ENCODE measurements at regions of chr7 and their contacts with region 1.

Region 1: DNA sequence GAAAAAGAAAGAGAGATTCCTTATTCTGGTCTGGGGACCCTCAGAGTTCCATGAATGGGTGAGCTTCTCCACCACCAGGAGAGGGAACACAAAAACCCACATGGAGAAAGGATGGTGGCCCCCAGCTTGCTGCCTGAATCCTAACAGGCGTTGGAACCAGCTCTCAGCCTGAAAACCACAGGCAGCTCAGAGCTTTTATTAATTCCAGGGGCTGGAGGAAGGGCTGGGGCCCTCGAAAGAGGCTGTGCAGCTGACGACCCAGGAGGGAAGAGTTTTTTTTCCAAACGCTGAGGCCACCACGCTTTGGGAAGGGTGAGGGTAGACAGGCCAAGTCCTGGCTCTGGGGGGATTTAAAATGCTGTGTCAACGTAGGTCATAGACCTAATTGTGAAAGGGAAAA is 10.8 kb upstream of the ELN start:
- DNase-seq: no peak
- H3K4me3 ChIP-seq: no peak overlapping the region
- CTCF ChIP-seq: no peak

Region 2: GRCh38 chr7:73865738-73866445 is 151.2 kb before region 1 on chr7:
- in situ Hi-C with region 1: loop called (anchors 5 kb)
- DNase-seq: no peak
- H3K4me3 ChIP-seq: no peak overlapping the region
- CTCF ChIP-seq: peak; percentile 74

Region 3: GRCh38 chr7:73978661-73979563 is 38.2 kb before region 1 on chr7:
- in situ Hi-C with region 1: no loop called
- DNase-seq: no peak
- H3K4me3 ChIP-seq: no peak overlapping the region
- CTCF ChIP-seq: peak; percentile 29

Region 4: GRCh38 chr7:74083117-74083876 is 66.2 kb after region 1 on chr7 and contains the start of gene LIMK1:
- in situ Hi-C with region 1: no loop called
- DNase-seq: peak; percentile 38
- H3K4me3 ChIP-seq: peak within 1 kb of the TSS; percentile 63
- CTCF ChIP-seq: no peak

Measured in astrocyte of the cerebellum (primary cell).